GM10248 (cell line): ENCODE measurements at regions of chr3 and their contacts with region 1.

Region 1: DNA sequence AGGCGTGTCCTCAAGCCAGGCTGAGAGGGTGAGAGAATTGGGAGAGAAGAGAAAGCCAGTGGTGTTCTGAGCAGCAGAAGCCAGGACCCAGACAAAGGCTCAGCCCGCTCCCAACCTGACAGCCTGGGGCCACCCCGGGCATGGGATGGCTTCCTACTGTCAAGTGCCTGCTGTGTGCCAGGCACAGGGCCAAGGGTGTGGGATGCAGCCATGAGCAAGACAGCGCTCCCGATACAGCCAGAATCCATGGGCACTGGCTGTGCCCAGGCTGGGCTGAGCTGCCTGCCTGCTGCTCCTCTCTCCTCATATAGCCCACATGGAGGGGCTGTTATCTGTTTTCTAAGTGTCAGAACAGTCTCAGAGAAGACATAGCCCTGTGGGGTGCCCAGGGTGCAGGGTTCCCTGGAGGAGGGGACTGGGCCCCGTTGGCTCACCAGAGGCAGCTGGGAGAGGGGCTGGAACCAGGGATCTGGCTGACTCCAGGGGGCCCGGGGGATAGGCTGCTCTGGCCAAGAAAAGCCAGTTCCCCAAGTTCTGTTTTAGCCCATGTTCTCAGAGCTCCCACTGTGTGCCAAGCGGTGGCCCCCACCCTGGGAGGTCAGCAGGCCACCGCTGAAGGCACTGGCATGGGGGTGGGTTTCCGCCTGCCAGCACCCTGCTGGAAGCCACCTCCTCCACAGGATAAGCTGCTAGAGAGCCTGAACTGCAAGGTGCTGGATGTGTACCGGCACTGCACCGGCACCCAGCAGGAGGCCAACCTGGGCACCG is 39.0 kb downstream of the CFAP100 start:
- DNase-seq: no peak
- CTCF ChIP-seq: no peak

Region 2: GRCh38 chr3:126284258-126284904 is 149.3 kb before region 1 on chr3:
- CTCF ChIA-PET with region 1: no interaction called
- POLR2A ChIA-PET with region 1: no interaction called
- DNase-seq: no peak
- CTCF ChIP-seq: no peak

Region 3: DNA sequence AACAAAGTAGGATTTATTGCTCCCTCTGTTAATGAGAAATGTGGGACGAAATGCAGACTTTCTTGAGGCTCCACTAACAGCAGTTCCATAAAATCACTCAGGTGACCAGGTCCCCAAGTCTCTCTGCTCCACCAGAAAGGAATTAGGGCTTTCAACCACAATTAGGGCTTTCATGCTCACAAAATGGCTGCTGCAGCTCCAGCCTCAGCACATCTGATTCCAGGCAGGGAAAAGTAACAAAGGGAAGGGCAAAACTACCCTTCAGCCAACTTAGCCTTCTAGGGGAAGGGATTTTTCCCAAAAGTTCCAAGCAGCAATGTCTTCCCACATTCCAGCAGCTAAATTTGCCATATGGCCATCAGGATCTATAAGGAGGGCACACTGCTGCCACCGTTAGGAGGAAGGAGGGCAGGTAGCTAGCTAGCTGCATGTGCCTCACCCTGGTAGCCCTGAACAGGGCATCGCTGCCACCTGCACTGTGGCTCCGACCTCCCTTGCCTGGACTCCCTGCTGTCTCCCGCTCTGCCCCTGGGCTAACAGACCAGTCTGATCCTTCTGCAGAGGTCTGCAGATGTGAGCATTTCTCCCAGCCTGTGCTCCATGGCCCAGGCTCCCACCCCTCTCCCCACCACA is 26.2 kb before region 1 on chr3:
- CTCF ChIA-PET with region 1: no interaction called
- POLR2A ChIA-PET with region 1: no interaction called
- DNase-seq: no peak
- CTCF ChIP-seq: no peak

Region 4: DNA sequence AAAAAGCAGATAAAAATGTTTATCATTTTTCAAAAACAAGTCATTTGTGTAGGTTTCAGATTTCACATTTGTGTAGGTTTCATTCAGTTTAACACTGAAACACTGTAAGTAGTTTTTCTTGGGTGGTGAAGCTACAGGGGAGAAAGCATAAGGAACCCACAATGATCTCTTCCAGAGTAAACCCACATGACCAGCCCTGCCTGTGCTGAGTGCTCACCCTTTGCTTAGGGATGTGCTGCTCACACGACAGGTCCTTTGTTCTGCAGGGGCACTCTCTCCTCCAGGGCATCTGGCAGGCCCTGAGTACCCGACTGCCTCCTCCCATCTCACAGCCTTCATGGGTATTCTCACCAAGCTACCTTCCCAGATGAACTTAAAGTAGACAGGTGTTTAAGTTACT is 13.1 kb after region 1 on chr3:
- CTCF ChIA-PET with region 1: interaction called, 14 read pairs
- POLR2A ChIA-PET with region 1: no interaction called
- DNase-seq: no peak
- CTCF ChIP-seq: no peak

Region 5: GRCh38 chr3:126630020-126630419 is 196.3 kb after region 1 on chr3:
- CTCF ChIA-PET with region 1: no interaction called
- POLR2A ChIA-PET with region 1: no interaction called
- DNase-seq: no peak
- CTCF ChIP-seq: no peak